ENCODE measurements at regions of chr12 and their contacts with region 1.

Region 1: GRCh38 chr12:65121049-65121955 is at the start of gene WIF1:
- DNase-seq: peak; percentile 40
- ATAC-seq: peak; percentile 86
- H3K4me3 Mint-ChIP-seq: peak within 1 kb of the TSS; percentile 44
- H3K27ac Mint-ChIP-seq: no peak within 1 kb of the TSS
- H3K4me1 Mint-ChIP-seq: peaks cover 3% of the 10 kb centered on the region
- H3K27me3 Mint-ChIP-seq: peaks cover 40% of the 10 kb centered on the region
- CTCF ChIP-seq: peak; percentile 53
- total RNA-seq, gene WIF1: not detected

Region 2: DNA sequence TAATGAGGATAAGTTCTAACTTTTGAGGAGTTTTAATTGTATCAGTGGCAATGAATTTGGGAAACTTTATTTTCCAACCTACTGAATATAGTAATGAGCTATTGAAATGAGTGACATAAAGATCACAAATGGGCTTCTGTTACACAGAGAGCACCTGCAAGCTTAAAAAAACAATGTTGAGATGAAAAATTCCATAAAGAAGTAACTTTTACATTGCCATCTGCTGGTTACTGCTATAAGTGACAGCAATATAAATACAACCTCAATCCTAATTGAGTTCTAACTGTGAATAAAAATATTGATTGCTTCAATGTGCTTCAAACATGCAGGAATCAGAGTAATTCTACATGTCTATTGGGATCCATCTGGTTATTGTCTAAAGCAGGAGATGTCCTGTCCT is 14.4 kb before region 1 on chr12:
- CTCF ChIA-PET with region 1: interaction called, 28 read pairs
- POLR2A ChIA-PET with region 1: no interaction called
- intact Hi-C with region 1: no loop called
- DNase-seq: no peak
- ATAC-seq: no peak
- H3K4me3 Mint-ChIP-seq: no peak overlapping the region
- H3K27ac Mint-ChIP-seq: no peak overlapping the region
- H3K4me1 Mint-ChIP-seq: no peaks in the 10 kb centered on the region
- H3K27me3 Mint-ChIP-seq: peaks cover 8% of the 10 kb centered on the region
- CTCF ChIP-seq: peak; percentile 50

Region 3: DNA sequence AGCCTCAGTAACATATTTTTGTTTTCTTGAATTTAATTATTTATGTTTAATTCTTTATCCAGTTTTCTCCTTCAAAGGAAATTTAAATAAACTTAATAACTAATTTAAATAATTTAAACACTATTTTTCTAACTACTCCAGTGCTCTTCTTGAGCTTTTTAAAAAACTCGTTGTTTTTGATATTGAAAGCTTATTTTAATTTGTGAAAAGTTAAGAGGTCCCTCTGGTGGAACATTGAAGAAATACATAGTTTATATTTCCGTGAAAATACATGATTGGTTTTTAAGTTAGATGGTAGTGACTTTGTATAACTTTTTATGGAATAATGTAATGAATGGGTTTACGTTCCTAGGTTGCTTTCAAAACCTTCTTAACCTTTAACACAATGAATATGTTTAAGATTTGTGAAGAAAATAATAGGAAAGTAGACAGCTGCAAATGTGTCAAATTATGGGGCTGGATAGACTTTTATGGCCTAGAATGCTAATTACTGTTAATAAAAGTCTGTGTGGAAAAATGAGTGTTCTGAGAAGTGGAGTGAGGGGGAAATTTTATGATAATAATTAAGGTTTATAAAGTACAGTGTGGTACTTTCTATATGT is 111.3 kb after region 1 on chr12:
- CTCF ChIA-PET with region 1: interaction called, 42 read pairs
- POLR2A ChIA-PET with region 1: no interaction called
- intact Hi-C with region 1: no loop called
- DNase-seq: no peak
- ATAC-seq: no peak
- H3K4me3 Mint-ChIP-seq: no peak overlapping the region
- H3K27ac Mint-ChIP-seq: no peak overlapping the region
- H3K4me1 Mint-ChIP-seq: peaks cover 10% of the 10 kb centered on the region
- H3K27me3 Mint-ChIP-seq: no peaks in the 10 kb centered on the region
- CTCF ChIP-seq: peak; percentile 63

Measured in activated CD8-positive, alpha-beta T cell treated with anti-CD3 and anti-CD28 coated beads for 36 hours (primary cell).